Activated CD8-positive, alpha-beta memory T cell treated with anti-CD3 and anti-CD28 coated beads, Interleukin-2, amount 10 ng/mL, durations not matched to agents 7 days and 5 days (primary cell): ENCODE measurements at regions of chr7 and their contacts with region 1.

Region 1: GRCh38 chr7:143263266-143264195 is at the start of gene GSTK1:
- DNase-seq: peak; percentile 88
- ATAC-seq: peak; percentile 98
- H3K4me3 Mint-ChIP-seq: peak within 1 kb of the TSS; percentile 99
- H3K27ac Mint-ChIP-seq: peak within 1 kb of the TSS; percentile 93
- H3K4me1 Mint-ChIP-seq: peaks cover 62% of the 10 kb centered on the region
- H3K27me3 Mint-ChIP-seq: no peaks in the 10 kb centered on the region
- total RNA-seq, gene GSTK1: 335 to 436 TPM

Region 2: GRCh38 chr7:143279186-143280098 is 15.9 kb after region 1 on chr7:
- CTCF ChIA-PET with region 1: interaction called, 28 read pairs
- DNase-seq: no peak
- ATAC-seq: peak; percentile 74
- H3K4me3 Mint-ChIP-seq: peak overlapping the region; percentile 62
- H3K27ac Mint-ChIP-seq: peak overlapping the region; percentile 81
- H3K4me1 Mint-ChIP-seq: peaks cover 36% of the 10 kb centered on the region
- H3K27me3 Mint-ChIP-seq: no peaks in the 10 kb centered on the region

Region 3: DNA sequence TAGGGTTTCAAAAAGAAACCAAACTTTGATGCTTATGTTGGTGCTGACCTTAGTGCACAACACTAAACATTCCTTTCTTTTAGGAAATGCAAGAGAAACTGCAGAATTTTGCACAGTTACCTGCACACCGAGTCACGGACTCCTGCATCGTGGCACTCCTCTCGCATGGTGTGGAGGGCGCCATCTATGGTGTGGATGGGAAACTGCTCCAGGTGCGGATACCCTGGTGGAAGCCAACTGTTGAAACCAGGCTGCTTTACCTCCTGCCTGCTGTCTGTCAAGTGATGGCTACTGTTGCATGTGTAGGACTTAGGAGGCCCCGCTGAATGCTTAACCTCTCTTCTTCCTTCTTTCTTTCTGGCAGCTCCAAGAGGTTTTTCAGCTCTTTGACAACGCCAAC is 36.3 kb after region 1 on chr7:
- CTCF ChIA-PET with region 1: interaction called, 10 read pairs
- DNase-seq: peak; percentile 70
- ATAC-seq: peak; percentile 88
- H3K4me3 Mint-ChIP-seq: no peak overlapping the region
- H3K27ac Mint-ChIP-seq: peak overlapping the region; percentile 25
- H3K4me1 Mint-ChIP-seq: peaks cover 45% of the 10 kb centered on the region
- H3K27me3 Mint-ChIP-seq: no peaks in the 10 kb centered on the region